ENCODE measurements at regions of chr17 and their contacts with region 1.

Region 1: DNA sequence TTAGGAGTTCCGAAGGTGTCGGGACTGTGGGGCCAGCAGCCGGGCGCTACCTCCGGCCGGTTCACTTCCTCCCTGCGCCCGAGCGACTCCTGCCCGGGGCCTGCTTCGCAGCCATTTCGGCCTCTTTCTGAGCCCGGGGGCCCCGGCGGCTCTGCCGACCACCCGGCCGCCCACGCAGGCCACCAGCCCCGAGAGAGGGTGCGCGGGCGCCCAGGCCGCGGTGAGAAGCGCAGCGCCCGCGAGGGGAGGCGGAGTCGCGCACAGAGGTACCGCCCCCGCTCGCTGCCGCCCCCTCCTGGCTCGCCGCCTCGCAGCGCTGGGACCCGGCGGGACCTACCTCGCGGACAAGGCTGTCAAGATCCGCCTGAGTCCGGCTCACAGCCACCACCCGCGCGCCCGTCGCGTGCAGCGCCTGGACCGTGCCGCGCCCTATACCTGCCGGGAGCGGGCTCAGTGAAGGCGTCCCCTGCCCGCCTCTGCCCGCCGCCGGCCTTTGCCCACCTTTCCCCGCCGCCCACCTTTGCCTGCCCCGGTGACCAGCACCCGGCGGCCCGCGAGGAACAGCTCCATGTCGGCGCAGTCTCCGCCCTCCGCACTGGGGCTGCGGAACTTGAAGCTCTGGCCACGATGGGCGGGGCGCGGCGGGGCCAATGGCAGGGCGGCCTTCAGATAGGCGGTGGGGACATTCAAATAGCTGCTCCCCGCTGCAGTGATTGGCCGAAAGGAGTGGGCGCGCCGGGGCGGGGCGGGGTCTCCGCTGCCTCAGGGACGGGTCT is at the start of gene DCXR:
- DNase-seq: peak; percentile 95
- ATAC-seq: peak; percentile 93
- H3K4me3 Mint-ChIP-seq: peak within 1 kb of the TSS; percentile 86
- H3K27ac Mint-ChIP-seq: peak within 1 kb of the TSS; percentile 94
- H3K4me1 Mint-ChIP-seq: peaks cover 27% of the 10 kb centered on the region
- H3K27me3 Mint-ChIP-seq: no peaks in the 10 kb centered on the region
- CTCF ChIP-seq: no peak
- total RNA-seq, gene DCXR: 84.3 and 85.2 TPM in 2 replicates

Region 2: DNA sequence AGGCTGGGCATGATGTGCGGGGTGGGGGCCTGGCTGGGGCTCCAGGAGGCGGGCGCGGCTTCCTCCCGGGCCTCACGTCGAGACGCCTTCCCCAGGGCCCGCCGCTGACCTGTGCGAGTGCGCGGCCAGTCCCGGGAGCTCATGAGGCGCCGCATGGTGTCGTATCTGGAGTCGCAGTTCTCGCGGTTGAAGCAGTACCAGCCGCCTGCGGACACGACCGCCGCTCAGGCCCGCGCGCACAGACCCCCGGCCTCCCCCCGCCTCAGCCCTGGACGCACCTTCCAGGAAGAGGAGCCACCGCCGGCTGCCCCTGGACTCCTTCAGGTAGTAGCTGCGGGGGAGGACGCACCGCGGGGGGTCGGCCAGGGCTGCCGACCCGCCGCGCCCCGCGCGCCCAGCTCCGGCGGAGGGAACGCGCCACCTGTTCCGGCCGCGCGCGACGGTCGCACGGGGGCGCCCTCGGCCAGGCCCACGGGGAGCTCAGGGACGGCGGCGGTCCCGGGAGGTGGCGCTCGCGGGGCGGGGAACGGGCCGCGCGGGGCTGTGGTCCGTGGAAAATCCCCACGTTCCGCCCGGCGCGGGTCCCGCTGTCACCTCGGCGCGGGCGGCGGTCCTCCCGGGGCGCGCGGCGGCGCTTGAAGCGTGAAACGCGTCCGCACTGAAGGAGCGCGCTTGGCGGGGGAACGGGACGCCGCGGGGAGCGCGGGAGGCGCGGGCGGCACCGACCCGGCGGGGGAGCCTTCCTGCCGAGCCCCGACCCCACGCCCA is 77.8 kb before region 1 on chr17:
- CTCF ChIA-PET with region 1: interaction called, 25 read pairs
- POLR2A ChIA-PET with region 1: interaction called, 7 read pairs
- intact Hi-C with region 1: no loop called
- DNase-seq: peak; percentile 90
- ATAC-seq: peak; percentile 95
- H3K4me3 Mint-ChIP-seq: no peak overlapping the region
- H3K27ac Mint-ChIP-seq: no peak overlapping the region
- H3K4me1 Mint-ChIP-seq: peaks cover 4% of the 10 kb centered on the region
- H3K27me3 Mint-ChIP-seq: peaks cover 25% of the 10 kb centered on the region
- CTCF ChIP-seq: peak; percentile 20

Region 3: DNA sequence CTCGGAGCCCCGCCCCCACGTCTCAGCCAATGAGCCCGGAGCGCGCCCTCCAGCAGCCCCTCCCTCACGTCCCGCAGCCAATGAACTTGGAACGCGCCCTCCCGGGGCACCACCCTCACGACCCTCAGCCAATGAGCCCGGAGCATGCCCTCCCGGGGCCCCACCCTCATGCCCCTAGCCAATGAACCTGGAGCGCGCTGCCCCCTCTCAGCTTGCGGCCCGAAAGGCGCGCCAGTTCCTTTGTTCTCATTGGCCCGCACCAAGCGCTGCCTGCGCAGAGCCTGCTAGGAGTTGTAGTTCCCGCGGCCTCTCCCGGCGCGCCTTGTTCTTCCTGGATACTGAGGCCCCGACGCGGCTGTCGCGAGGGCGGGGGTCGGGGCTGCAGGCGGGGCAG is 14.3 kb before region 1 on chr17 and contains the start of gene LRRC45:
- CTCF ChIA-PET with region 1: interaction called, 3 read pairs
- POLR2A ChIA-PET with region 1: interaction called, 43 read pairs
- intact Hi-C with region 1: loop called (anchors 1 kb)
- DNase-seq: peak; percentile 97
- ATAC-seq: peak; percentile 96
- H3K4me3 Mint-ChIP-seq: peak within 1 kb of the TSS; percentile 85
- H3K27ac Mint-ChIP-seq: no peak within 1 kb of the TSS
- H3K4me1 Mint-ChIP-seq: peaks cover 22% of the 10 kb centered on the region
- H3K27me3 Mint-ChIP-seq: no peaks in the 10 kb centered on the region
- CTCF ChIP-seq: no peak
- total RNA-seq, gene LRRC45: 10.6 and 10.8 TPM in 2 replicates

Region 4: GRCh38 chr17:82065638-82066303 is 28.5 kb after region 1 on chr17 and contains the start of gene DUS1L:
- CTCF ChIA-PET with region 1: no interaction called
- POLR2A ChIA-PET with region 1: interaction called, 14 read pairs
- intact Hi-C with region 1: loop called (anchors 2 kb)
- DNase-seq: peak; percentile 79
- ATAC-seq: peak; percentile 89
- H3K4me3 Mint-ChIP-seq: peak within 1 kb of the TSS; percentile 84
- H3K27ac Mint-ChIP-seq: peak within 1 kb of the TSS; percentile 78
- H3K4me1 Mint-ChIP-seq: peaks cover 15% of the 10 kb centered on the region
- H3K27me3 Mint-ChIP-seq: no peaks in the 10 kb centered on the region
- CTCF ChIP-seq: no peak
- total RNA-seq, gene DUS1L: 127 and 134 TPM in 2 replicates

Region 5: DNA sequence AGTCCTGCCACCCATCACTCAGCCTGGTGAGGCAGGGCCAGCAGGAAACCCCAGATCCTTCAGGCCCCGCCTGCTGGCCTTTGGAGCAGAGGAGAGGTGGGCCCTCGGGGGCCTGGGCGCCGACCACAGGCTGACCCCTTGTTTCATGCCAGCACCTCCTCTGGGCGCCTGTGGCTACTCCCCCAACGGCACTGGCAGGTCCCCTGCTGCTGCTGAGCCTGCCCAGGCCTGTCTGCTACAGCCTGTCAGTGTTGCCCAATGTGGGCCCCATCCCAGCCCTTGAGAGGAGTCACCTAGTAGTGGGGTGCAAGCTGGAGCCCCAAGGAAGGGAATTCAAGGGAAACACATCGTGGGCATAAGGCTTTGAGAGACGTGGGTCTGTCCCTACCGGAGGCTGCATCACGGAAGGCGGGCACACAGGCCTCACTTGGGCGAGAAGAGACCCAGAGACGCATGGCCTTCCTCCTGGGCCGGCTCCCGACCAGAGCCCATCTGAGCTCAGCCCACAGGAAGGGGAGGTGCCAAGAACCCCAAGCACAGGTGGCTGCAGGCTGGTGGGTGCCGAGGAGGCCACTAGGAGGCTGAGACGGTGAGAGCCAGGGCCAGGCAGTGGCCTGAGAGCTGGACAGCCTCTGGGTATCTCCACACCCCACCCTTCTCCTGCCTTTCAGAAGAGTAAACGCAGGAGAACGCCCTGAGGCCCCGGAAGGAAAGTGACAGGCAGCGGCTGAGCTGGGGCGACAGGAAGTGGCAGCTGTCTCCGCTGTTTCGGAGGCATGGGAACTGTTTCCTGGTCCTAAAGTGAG is 68.8 kb after region 1 on chr17:
- CTCF ChIA-PET with region 1: interaction called, 3 read pairs
- POLR2A ChIA-PET with region 1: interaction called, 13 read pairs
- intact Hi-C with region 1: loop called (anchors 2 kb)
- DNase-seq: peak; percentile 53
- ATAC-seq: peak; percentile 97
- H3K4me3 Mint-ChIP-seq: peak overlapping the region; percentile 88
- H3K27ac Mint-ChIP-seq: peak overlapping the region; percentile 94
- H3K4me1 Mint-ChIP-seq: peaks cover 32% of the 10 kb centered on the region
- H3K27me3 Mint-ChIP-seq: no peaks in the 10 kb centered on the region
- CTCF ChIP-seq: no peak

Region 6: GRCh38 chr17:82292251-82293154 is 255.2 kb after region 1 on chr17:
- CTCF ChIA-PET with region 1: no interaction called
- POLR2A ChIA-PET with region 1: interaction called, 9 read pairs
- intact Hi-C with region 1: loop called (anchors 10 kb)
- DNase-seq: peak; percentile 81
- ATAC-seq: peak; percentile 91
- H3K4me3 Mint-ChIP-seq: peak overlapping the region; percentile 87
- H3K27ac Mint-ChIP-seq: peak overlapping the region; percentile 84
- H3K4me1 Mint-ChIP-seq: peaks cover 38% of the 10 kb centered on the region
- H3K27me3 Mint-ChIP-seq: no peaks in the 10 kb centered on the region
- CTCF ChIP-seq: no peak

Measured in activated B cell treated with CpG ODN at 0.5 μM for 24 hours (primary cell).